H1 (cell line): ENCODE measurements at regions of chr7 and their contacts with region 1.

Region 1: GRCh38 chr7:39383136-39383535 is 183.1 kb upstream of the YAE1 start:
- DNase-seq: no peak
- H3K4me3 ChIP-seq: no peak overlapping the region
- H3K27ac ChIP-seq: no peak overlapping the region
- H3K4me1 ChIP-seq: no peaks in the 10 kb centered on the region
- H3K27me3 ChIP-seq: no peaks in the 10 kb centered on the region
- CTCF ChIP-seq: no peak
- EP300 ChIP-seq: no peak
- POLR2A ChIP-seq: no peak
- RAD21 ChIP-seq: no peak

Region 2: GRCh38 chr7:39324139-39324760 is 58.9 kb before region 1 on chr7:
- CTCF ChIA-PET with region 1: no interaction called
- POLR2A ChIA-PET with region 1: no interaction called
- DNase-seq: no peak
- H3K4me3 ChIP-seq: no peak overlapping the region
- H3K27ac ChIP-seq: no peak overlapping the region
- H3K4me1 ChIP-seq: peaks cover 0 to 3% (median 0%) of the 10 kb centered on the region in 4 experiments; a peak in 2 of 7 replicates
- H3K27me3 ChIP-seq: no peaks in the 10 kb centered on the region
- CTCF ChIP-seq: no peak
- EP300 ChIP-seq: no peak
- POLR2A ChIP-seq: no peak
- RAD21 ChIP-seq: no peak

Region 3: DNA sequence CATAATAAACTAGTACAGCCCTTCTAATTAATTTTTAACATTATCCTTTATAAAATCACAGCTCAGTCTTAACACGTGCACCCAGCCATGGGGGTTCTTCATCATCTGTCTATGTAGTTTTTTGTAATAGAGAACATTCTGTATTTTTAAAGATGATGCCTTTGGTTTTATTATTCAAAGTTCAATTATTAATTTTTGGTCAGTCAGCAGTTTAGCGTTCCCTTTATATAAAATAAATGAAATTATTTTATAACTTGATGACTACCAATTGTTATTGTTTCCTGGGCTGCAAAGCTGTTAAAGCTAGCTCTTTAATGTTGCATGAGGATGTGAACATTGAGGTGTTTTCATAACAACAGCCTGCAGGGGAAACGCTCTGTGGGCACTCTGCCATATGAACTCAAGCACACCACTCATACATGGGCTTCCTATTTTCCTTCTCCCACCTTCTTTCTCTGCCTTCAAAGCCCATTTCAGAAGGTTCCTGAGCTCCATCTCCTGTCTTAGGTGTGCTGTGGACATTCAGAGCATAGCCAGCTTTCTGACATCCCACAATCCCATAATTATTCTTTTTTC is 11.1 kb after region 1 on chr7:
- CTCF ChIA-PET with region 1: interaction called, 26 read pairs
- POLR2A ChIA-PET with region 1: no interaction called
- DNase-seq: no peak
- H3K4me3 ChIP-seq: no peak overlapping the region
- H3K27ac ChIP-seq: no peak overlapping the region
- H3K4me1 ChIP-seq: peaks cover 1 to 4% (median 2%) of the 10 kb centered on the region in 4 experiments; a peak in 3 of 7 replicates
- H3K27me3 ChIP-seq: no peaks in the 10 kb centered on the region
- CTCF ChIP-seq: no peak
- EP300 ChIP-seq: no peak
- POLR2A ChIP-seq: no peak
- RAD21 ChIP-seq: no peak